Activated CD4-positive, alpha-beta memory T cell treated with anti-CD3 and anti-CD28 coated beads for 36 hours (primary cell): ENCODE measurements at regions of chr7 and their contacts with region 1.

Region 1: GRCh38 chr7:50206453-50207250 is 97.9 kb upstream of the IKZF1 start:
- DNase-seq: peak; percentile 86
- H3K4me3 Mint-ChIP-seq: peak overlapping the region; percentile 50
- H3K27ac Mint-ChIP-seq: peak overlapping the region; percentile 86
- H3K4me1 Mint-ChIP-seq: peaks cover 84% of the 10 kb centered on the region
- H3K27me3 Mint-ChIP-seq: no peaks in the 10 kb centered on the region

Region 2: DNA sequence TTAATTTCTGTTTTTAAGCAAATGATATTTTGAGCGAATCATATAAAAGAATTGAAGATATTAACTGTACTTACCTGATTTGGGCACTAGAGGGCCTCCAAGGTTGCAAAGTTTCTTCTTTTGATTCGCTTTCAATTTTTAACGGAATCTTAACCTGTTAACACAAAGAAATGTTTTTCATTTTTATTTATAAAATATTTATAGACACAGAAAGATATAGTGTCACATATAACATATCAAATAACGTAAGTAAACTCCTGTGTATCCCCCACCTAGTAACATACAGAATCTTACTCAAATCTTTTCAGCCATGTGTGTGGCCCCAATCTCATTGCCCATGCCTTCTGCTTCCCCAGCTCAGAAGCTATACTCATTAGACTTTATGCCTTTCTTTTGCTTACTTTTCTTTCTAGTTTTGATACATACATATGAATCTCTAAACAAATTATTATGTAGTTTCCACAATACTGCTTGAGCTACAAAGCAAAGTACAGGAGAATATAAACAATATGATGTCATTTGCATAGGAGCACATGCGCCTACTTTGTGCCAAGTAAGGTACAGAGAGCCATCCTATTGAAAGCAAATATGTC is 64.1 kb before region 1 on chr7:
- CTCF ChIA-PET with region 1: interaction called, 18 read pairs
- POLR2A ChIA-PET with region 1: no interaction called
- intact Hi-C with region 1: loop called (anchors 2 kb)
- DNase-seq: no peak
- H3K4me3 Mint-ChIP-seq: peak overlapping the region; percentile 14
- H3K27ac Mint-ChIP-seq: peak overlapping the region; percentile 59
- H3K4me1 Mint-ChIP-seq: peaks cover 28% of the 10 kb centered on the region
- H3K27me3 Mint-ChIP-seq: peaks cover 2% of the 10 kb centered on the region

Region 3: GRCh38 chr7:50266635-50267386 is 60.2 kb after region 1 on chr7:
- CTCF ChIA-PET with region 1: interaction called, 58 read pairs
- POLR2A ChIA-PET with region 1: interaction called, 17 read pairs
- intact Hi-C with region 1: loop called (anchors 1 kb)
- DNase-seq: peak; percentile 90
- H3K4me3 Mint-ChIP-seq: peak overlapping the region; percentile 64
- H3K27ac Mint-ChIP-seq: peak overlapping the region; percentile 96
- H3K4me1 Mint-ChIP-seq: peaks cover 96% of the 10 kb centered on the region
- H3K27me3 Mint-ChIP-seq: no peaks in the 10 kb centered on the region

Region 4: DNA sequence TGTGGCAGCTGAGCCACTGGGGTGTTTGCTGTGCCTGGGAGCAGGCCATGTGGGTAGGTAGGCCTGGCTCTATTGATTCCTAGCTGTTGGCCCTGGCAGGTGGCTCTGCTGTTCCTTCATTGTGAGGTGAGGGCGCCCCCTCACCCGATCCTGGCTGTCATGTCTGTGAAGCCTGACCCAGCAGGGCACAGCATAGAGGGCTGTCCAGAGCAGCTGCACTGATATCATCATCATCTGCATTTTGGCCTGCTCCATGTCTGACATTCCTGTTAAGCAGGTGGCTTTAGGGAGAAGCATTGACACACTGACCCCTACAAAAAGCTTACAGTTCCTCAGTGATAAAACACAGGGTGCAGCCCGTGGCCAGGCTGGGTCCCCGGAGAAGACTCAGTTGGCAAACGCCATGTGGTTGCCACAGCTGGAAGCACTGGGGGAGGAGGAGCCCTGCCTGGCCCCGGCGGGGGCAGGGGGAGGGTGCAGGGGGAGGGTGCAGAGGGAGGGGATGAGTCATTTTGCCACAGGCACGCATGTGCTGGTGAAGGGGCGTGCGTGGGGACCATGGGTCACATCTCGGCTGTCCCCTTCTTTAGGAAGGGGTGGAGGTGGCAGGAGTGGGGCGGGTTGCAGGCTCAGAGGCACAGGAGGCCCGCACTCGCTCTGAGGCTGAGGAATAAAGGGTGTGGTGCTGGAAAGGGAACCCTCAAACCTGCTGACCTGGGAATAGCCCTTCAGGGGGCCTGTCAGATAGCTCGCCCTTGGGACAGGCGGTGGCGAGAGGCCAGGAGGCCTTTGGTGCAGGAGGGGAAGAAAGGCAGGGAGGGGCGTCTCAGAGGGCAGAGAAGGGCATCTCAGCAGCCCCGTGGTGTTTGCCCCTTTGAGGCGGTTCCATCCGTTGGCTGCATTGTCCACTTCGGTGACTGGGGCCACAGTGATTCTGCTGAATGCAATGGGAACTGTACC is 129.4 kb after region 1 on chr7:
- CTCF ChIA-PET with region 1: interaction called, 24 read pairs
- POLR2A ChIA-PET with region 1: interaction called, 6 read pairs
- intact Hi-C with region 1: no loop called
- DNase-seq: peak; percentile 93
- H3K4me3 Mint-ChIP-seq: no peak overlapping the region
- H3K27ac Mint-ChIP-seq: no peak overlapping the region
- H3K4me1 Mint-ChIP-seq: peaks cover 2% of the 10 kb centered on the region
- H3K27me3 Mint-ChIP-seq: no peaks in the 10 kb centered on the region

Region 5: DNA sequence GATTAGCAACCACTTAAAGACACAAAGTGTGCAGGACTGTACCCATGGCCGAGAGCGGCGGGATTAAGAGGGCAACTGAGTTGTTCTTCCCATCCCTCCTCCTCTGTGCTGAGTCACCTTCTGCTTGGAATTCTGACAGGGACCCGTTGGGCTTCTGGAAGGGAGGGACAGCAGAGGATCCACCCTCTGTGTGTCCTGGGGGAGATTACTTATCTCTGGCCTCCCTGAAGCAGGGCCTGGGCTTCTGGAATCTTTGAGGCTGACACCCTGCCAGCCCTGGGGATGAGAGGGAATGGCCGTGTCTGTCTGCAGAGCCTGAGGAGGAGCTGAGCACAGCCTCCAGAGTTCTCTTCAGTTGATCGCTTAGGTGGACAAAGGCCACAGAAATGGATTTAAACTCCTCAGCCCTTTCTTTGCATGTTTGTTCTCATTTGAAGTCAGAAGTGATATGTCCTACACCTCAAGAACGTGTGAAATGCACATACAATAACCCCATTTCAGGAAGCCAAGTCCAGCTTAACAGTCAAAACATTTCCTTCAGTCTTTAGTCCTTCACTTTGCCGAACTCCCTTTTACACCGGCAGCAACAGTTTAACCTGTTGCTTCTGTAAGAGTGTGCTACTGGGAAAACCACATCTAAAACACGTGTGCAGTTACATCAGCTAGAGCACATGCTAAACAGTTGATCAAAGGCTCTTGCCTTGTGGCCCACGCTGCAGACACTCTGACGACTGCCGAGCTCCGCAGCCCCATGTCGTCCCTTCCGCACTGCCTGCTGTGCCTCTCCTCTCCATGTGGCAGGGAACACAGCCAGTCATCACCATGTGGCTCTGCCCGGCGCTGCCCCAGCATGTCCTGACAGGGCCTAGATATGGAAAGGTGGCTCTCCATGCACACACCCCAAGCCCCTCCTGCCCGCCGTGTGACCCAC is 153.6 kb after region 1 on chr7:
- CTCF ChIA-PET with region 1: interaction called, 159 read pairs
- POLR2A ChIA-PET with region 1: interaction called, 4 read pairs
- intact Hi-C with region 1: no loop called
- DNase-seq: peak; percentile 90
- H3K4me3 Mint-ChIP-seq: peak overlapping the region; percentile 61
- H3K27ac Mint-ChIP-seq: peak overlapping the region; percentile 97
- H3K4me1 Mint-ChIP-seq: peaks cover 98% of the 10 kb centered on the region
- H3K27me3 Mint-ChIP-seq: no peaks in the 10 kb centered on the region

Region 6: GRCh38 chr7:50418086-50418515 is 211.4 kb after region 1 on chr7:
- CTCF ChIA-PET with region 1: interaction called, 131 read pairs
- POLR2A ChIA-PET with region 1: interaction called, 3 read pairs
- intact Hi-C with region 1: loop called (anchors 1 kb)
- DNase-seq: peak; percentile 87
- H3K4me3 Mint-ChIP-seq: no peak overlapping the region
- H3K27ac Mint-ChIP-seq: no peak overlapping the region
- H3K4me1 Mint-ChIP-seq: peaks cover 24% of the 10 kb centered on the region
- H3K27me3 Mint-ChIP-seq: no peaks in the 10 kb centered on the region

Region 7: DNA sequence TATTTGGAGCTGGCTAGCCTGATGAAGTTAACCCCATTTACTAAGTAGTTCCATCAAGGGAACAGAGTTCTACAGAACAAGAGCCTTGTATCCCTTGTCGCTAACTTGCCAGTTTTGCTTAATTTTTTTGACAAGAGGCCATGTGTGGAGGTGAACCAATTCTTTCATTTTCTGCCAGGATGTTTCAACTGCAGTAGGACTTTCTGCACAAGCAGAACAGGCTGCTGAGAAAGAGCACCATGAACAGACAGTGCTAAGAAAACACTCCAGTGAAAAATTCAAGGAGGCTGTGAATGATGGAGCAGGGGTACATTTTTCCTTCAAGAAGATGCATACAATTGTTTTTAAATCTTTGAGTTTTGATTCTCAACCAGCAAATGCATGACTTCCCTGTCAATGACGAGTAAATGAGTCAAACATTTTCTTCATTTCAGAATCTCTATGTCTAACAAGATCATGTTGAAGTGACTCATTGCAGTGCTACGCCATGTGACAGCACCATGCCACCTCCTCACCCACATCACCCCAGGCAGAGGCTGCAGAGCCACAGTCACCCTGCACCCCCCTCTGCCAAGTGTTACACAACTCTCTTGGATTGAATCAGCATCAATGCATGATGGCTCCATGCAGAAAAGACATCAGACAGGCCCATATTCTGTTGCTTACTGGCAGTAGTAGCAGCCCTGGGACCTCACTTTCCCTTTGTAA is 916.8 kb after region 1 on chr7:
- CTCF ChIA-PET with region 1: no interaction called
- POLR2A ChIA-PET with region 1: no interaction called
- intact Hi-C with region 1: loop called (anchors 5 kb)
- DNase-seq: peak; percentile 92
- H3K4me3 Mint-ChIP-seq: peak overlapping the region; percentile 53
- H3K27ac Mint-ChIP-seq: peak overlapping the region; percentile 96
- H3K4me1 Mint-ChIP-seq: peaks cover 40% of the 10 kb centered on the region
- H3K27me3 Mint-ChIP-seq: peaks cover 1% of the 10 kb centered on the region